GM12878 (cell line): ENCODE measurements at regions of chr10 and their contacts with region 1.

Region 1: GRCh38 chr10:125868372-125868975 is 12.6 kb downstream of the DHX32 start:
- DNase-seq: no peak
- ATAC-seq: peak; percentile 71
- H3K4me3 ChIP-seq: no peak overlapping the region
- H3K27ac ChIP-seq: no peak overlapping the region
- H3K4me1 ChIP-seq: no peaks in the 10 kb centered on the region
- H3K27me3 ChIP-seq: no peaks in the 10 kb centered on the region
- CTCF ChIP-seq: peak; percentile 73 to 79 (median 74)
- EP300 ChIP-seq: no peak
- POLR2A ChIP-seq: no peak
- RAD21 ChIP-seq: peak; percentile 76

Region 2: DNA sequence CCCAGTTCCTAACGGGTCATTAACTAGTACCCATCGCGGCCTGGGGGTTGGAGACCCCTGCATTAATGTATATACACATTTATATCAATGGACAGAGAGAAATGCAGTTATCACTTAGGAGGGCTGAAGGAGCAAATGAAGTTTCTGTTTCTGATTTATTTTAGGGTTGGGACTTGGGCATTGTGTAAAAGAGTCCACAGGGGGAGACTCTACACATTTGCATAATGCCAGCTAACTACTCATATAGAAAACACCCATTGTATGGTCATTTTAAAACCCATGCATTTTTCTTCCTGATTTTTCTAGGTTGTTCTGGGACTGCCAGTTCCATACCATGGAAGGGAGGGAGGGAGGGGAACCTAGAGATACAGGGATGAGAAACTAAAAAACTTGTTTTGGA is 21.6 kb before region 1 on chr10:
- CTCF ChIA-PET with region 1: interaction called, 11 read pairs
- POLR2A ChIA-PET with region 1: no interaction called
- RAD21 ChIA-PET with region 1: no interaction called
- SMC1A ChIA-PET with region 1: interaction called, 3 read pairs
- in situ Hi-C with region 1: no loop called
- intact Hi-C with region 1: no loop called
- DNase-seq: no peak
- ATAC-seq: peak; percentile 85
- H3K4me3 ChIP-seq: no peak overlapping the region
- H3K27ac ChIP-seq: no peak overlapping the region
- H3K4me1 ChIP-seq: no peaks in the 10 kb centered on the region
- H3K27me3 ChIP-seq: no peaks in the 10 kb centered on the region
- CTCF ChIP-seq: no peak
- EP300 ChIP-seq: no peak
- POLR2A ChIP-seq: no peak
- RAD21 ChIP-seq: no peak

Region 3: GRCh38 chr10:125976960-125977603 is 108.6 kb after region 1 on chr10:
- CTCF ChIA-PET with region 1: interaction called, 6 read pairs
- POLR2A ChIA-PET with region 1: interaction called, 3 read pairs
- RAD21 ChIA-PET with region 1: no interaction called
- SMC1A ChIA-PET with region 1: no interaction called
- in situ Hi-C with region 1: no loop called
- intact Hi-C with region 1: loop called (anchors 10 kb)
- DNase-seq: no peak
- ATAC-seq: 0 out of 3 replicates have a peak, but pooled peaks have one; percentile 37
- H3K4me3 ChIP-seq: no peak overlapping the region
- H3K27ac ChIP-seq: no peak overlapping the region
- H3K4me1 ChIP-seq: no peaks in the 10 kb centered on the region
- H3K27me3 ChIP-seq: no peaks in the 10 kb centered on the region
- CTCF ChIP-seq: peak; percentile 35 to 49 (median 39); a peak in 5 of 6 replicates
- EP300 ChIP-seq: no peak
- POLR2A ChIP-seq: no peak
- RAD21 ChIP-seq: no peak

Region 4: DNA sequence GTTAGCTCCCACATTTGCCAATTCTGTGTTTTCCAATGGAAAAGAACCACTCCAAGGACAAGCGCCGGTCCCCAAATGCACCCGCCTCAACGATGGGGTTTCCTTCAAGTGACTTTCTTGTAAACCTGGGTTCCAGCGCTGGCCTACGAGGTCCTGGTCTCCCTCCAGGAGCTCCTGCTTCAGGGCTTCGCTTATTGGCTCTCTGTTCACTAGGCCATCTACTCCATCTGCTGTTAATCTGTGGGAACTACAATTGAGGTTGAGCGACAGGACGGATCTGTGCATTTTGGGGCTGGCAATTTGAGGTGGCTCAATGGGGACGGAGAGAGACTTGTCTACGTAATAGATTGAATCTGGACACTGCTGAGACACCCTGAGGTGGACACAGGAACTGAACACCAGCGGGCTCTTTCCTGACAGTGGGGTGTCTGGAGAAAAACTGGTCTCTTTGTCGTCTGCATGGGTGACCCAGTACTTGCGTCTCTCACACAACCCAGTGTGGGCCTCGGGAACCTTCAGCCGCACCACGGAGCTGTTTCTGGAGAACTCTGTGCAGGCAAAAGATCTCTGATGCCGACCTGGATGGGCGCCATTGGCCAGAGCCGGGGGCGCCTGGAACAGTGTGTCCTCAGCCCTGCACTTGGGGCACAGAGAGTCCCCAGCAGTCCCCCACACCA is 635.7 kb after region 1 on chr10:
- CTCF ChIA-PET with region 1: no interaction called
- POLR2A ChIA-PET with region 1: interaction called, 7 read pairs
- RAD21 ChIA-PET with region 1: no interaction called
- SMC1A ChIA-PET with region 1: no interaction called
- in situ Hi-C with region 1: no loop called
- intact Hi-C with region 1: loop called (anchors 2 kb)
- DNase-seq: no peak
- ATAC-seq: no peak
- H3K4me3 ChIP-seq: no peak overlapping the region
- H3K27ac ChIP-seq: no peak overlapping the region
- H3K4me1 ChIP-seq: no peaks in the 10 kb centered on the region
- H3K27me3 ChIP-seq: no peaks in the 10 kb centered on the region
- CTCF ChIP-seq: peak; percentile 10 to 48 (median 43); a peak in 5 of 6 replicates
- EP300 ChIP-seq: no peak
- POLR2A ChIP-seq: no peak
- RAD21 ChIP-seq: peak; percentile 62